ENCODE measurements at regions of chr15 and their contacts with region 1.

Region 1: DNA sequence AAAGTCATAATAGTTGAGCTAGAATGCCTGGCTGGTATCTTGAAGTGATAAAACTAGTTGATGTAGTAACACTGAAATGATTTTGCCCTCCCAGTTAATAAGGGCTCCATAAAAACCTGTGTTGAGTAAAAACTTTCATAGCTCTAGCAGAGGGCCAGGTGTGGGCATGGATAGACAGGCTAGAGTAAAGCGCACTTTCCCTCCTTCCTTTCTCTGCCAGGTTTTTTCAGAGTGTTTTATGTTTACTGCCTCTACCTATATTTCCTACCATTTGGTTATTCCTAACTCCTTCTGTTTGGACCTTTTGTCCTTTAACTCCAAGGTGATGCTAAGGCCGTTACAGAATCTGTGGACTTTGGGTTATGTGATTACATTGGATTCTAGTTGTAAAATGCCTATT is 25.3 kb downstream of the CHD2 start:
- DNase-seq: no peak
- H3K4me3 ChIP-seq: no peak overlapping the region
- CTCF ChIP-seq: no peak

Region 2: DNA sequence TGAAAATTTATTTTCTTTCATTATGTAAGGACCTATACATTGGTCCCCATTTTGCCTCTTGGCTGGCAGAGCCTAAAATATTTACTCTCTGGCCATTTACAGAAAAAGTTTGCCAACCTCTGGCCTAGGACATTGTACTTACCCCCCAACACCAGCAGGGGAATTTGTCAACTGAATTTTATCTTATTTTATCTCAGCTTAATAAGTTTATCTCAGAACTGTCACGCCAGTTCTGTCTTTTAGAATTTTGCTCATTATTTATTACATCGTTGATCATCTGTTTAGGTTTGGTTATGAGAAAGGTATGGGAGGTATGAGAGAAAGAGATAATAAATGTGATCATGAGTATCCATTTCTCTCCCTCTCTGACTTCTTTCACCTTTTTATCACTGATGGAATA is 12.9 kb after region 1 on chr15:
- CTCF ChIA-PET with region 1: interaction called, 13 read pairs
- POLR2A ChIA-PET with region 1: interaction called, 3 read pairs
- DNase-seq: no peak
- H3K4me3 ChIP-seq: no peak overlapping the region
- CTCF ChIP-seq: no peak

Measured in AG04449 (cell line).